Activated CD4-positive, alpha-beta T cell treated with anti-CD3 and anti-CD28 coated beads, Interleukin-2, amount 10 ng/mL, durations not matched to agents 7 days and 5 days (primary cell): ENCODE measurements at regions of chr2 and their contacts with region 1.

Region 1: DNA sequence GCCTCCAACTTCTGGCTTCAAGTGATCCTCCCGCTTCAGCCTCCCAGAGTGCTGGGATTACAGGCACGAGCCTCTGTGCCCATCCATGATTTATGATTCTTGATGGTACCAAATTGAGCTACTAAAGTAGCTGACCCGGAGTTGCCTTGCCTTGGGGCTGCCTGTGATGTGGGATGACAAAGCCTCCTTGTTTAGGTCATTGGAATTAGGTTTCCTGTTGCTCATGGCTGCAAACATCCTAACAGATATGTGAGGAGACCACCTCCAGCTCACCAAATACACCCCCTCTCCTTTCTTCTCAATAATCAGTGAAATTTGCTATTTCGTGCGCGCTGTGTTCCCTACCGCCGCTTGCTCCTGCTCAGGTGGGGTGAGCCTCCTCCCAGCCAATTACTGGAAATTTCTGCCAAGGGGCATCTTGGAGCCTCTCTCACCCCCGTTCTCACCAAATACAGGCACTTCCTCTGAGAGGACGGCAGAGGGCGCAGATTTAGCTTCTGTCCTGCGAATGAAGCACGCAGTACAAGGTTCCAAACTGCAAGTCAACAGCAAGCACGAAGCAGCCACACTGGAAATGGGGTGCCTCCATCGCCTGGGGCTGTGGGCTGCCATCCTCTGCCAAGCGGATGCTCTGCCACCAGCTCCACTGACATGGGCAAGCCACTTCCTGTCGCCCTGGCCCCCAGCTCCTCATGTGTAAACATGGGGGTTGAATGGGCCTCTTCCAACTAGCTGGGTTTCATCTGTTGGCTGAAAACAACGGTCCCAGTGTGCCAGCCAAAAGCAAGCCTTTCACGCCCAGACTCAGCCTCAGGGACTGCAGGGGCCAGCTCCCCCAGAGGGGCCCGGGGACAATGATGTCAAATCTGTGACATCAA is 71.7 kb downstream of the NCAPH start:
- DNase-seq: peak; percentile 84
- H3K4me3 Mint-ChIP-seq: peak overlapping the region; percentile 57
- H3K27ac Mint-ChIP-seq: peak overlapping the region; percentile 92
- H3K4me1 Mint-ChIP-seq: peaks cover 35% of the 10 kb centered on the region
- H3K27me3 Mint-ChIP-seq: no peaks in the 10 kb centered on the region

Region 2: DNA sequence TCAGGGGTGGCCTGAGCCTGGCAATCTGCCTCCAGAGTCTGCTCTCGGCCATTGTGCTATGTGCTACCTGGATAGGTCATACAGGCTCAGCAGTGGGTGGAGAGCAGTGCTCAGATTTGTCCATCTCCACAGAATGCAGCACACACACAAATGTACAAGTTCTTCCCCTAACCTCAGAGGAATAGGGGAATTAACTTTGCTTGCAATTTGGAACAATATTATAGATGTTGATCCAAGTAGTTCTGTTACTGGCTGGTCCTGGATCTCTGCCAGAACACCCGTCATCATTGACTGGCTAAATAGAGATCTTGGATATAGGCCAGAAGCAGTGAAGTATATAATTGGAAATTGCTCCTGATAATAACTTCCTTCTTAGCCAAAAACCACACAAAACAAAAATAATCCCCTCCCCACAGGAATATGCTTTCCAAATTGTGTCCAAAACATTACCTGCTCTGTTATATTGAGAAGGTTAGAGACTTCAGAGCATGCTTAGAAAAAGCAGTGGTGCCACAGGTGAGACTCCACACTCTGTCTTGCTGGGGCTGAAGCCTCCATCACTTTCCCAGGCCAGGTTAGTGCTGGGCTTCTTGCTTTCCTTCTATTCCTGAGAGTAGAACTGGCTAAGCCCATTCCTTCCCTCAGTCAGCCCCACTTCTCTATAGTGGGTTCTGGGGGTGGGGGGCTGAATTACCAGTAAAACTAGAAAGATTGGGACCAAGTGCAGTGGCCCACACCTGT is 32.9 kb before region 1 on chr2:
- CTCF ChIA-PET with region 1: no interaction called
- POLR2A ChIA-PET with region 1: no interaction called
- DNase-seq: no peak
- H3K4me3 Mint-ChIP-seq: no peak overlapping the region
- H3K27ac Mint-ChIP-seq: no peak overlapping the region
- H3K4me1 Mint-ChIP-seq: no peaks in the 10 kb centered on the region
- H3K27me3 Mint-ChIP-seq: no peaks in the 10 kb centered on the region

Region 3: DNA sequence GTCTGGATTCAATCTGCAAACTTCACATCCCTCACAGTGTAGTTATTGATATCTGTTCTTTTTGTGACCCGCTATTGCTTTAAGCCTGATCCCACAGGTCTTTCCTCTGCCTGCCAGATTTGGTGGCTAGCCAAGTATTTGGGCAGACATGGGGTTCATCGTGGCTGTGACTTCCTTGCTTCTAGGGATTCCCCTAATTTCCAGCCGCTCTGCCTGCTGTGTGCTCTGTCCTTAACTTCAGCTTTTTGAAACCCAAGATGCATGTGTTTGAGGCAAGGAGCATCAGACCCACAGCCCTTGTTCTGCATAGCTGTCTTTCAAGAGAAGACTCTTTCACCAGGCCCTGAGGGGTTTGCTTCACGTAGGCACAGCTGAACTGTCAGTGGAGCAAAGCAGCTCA is 17.5 kb before region 1 on chr2:
- CTCF ChIA-PET with region 1: interaction called, 11 read pairs
- POLR2A ChIA-PET with region 1: no interaction called
- DNase-seq: no peak
- H3K4me3 Mint-ChIP-seq: no peak overlapping the region
- H3K27ac Mint-ChIP-seq: no peak overlapping the region
- H3K4me1 Mint-ChIP-seq: peaks cover 9% of the 10 kb centered on the region
- H3K27me3 Mint-ChIP-seq: peaks cover 2% of the 10 kb centered on the region

Region 4: DNA sequence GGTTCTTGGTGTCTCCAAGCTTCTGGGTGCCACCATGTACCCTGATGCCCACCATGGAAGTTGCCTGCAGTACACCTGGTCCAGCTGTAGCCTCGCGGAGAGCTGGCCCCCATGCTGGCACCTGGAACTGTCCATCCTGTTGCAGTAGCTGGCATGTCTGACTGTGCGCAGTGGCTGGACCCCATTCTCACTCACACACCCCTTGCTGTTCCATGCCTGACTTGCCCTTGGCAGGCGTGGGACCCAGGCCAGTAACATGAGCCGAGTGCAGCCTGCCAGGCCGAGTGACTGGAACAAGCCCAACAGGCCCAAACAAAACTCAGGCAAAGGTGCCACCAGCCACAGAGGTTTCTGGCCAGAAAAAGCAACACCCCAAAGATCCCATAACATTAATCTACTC is 24.0 kb after region 1 on chr2:
- CTCF ChIA-PET with region 1: interaction called, 11 read pairs
- POLR2A ChIA-PET with region 1: interaction called, 4 read pairs
- DNase-seq: no peak
- H3K4me3 Mint-ChIP-seq: no peak overlapping the region
- H3K27ac Mint-ChIP-seq: no peak overlapping the region
- H3K4me1 Mint-ChIP-seq: peaks cover 6% of the 10 kb centered on the region
- H3K27me3 Mint-ChIP-seq: peaks cover 5% of the 10 kb centered on the region

Region 5: DNA sequence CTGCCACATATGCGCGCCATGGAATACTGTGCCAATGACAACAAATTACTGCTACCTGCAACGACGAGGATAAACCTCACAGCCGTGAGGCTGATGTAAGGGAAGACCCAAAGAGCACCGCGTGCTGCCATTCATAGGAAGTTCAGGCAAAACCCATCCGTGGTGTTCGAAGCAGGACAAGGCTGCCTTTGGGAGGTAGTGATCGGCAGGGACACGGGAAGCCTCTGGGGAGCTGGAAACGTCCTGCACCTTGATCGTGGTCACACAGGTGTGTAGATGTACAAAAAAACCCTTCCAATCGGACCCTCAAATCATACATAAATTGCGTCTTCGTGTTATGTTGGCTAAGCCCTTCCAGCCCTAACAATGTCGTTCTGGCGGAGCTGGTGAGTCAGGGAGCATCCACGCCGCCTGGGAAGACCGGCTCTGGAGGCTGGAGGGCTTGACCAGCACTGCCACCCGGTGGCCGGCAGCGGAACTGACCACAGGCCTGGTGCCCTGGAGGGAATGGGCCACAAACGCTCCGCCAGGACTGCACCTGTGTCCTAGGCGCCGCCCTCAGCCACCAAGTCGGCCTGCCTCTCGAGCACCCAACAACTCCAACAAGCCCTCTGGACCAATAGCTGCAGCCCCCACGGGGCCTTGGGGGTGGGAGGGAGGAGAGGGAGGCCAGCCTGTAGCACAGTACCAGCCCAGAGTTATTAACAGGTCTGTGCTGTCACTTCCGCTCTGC is 102.0 kb after region 1 on chr2:
- CTCF ChIA-PET with region 1: interaction called, 57 read pairs
- POLR2A ChIA-PET with region 1: no interaction called
- DNase-seq: peak; percentile 64
- H3K4me3 Mint-ChIP-seq: no peak overlapping the region
- H3K27ac Mint-ChIP-seq: peak overlapping the region; percentile 73
- H3K4me1 Mint-ChIP-seq: peaks cover 26% of the 10 kb centered on the region
- H3K27me3 Mint-ChIP-seq: peaks cover 10% of the 10 kb centered on the region

Region 6: DNA sequence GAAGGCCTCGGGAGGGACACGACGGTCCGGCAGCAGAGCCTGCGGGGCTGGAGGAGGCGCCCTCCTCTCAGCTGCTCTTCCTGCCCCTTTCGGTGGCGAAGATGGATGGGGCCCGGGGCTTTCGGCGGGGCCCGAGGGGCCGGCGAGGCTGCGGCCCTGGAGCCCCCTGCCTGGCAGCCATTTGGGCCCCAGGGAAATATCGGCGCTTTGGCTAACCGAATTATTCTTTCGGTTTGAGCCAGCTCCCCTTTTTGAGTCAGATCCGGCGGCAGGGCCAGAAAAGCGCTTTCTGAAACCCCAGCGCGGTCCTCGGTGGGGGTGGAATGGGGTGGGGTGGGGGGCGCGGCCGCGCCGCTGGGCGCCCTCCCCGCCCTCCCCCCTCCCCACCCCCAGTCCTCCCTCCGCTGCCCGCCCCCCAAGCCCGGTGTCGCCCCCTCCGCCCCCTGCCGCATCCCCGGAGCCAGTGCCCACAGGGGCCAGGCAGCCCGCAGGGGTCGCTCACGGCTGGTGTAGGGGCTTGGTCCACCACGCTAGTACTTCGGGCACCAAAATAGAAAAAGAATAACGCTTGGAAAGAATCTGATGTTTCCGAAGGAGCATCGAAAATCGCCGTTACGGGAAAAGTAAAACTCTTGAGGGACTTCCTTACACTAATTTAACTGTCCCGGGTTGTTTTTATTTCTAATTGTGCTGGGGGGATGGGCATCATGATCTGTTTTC is 120.2 kb after region 1 on chr2:
- CTCF ChIA-PET with region 1: interaction called, 11 read pairs
- POLR2A ChIA-PET with region 1: no interaction called
- DNase-seq: peak; percentile 73
- H3K4me3 Mint-ChIP-seq: peak overlapping the region; percentile 72
- H3K27ac Mint-ChIP-seq: peak overlapping the region; percentile 87
- H3K4me1 Mint-ChIP-seq: peaks cover 90% of the 10 kb centered on the region
- H3K27me3 Mint-ChIP-seq: no peaks in the 10 kb centered on the region

Region 7: GRCh38 chr2:96554293-96555145 is 147.2 kb after region 1 on chr2:
- CTCF ChIA-PET with region 1: interaction called, 21 read pairs
- POLR2A ChIA-PET with region 1: no interaction called
- DNase-seq: peak; percentile 70
- H3K4me3 Mint-ChIP-seq: no peak overlapping the region
- H3K27ac Mint-ChIP-seq: peak overlapping the region; percentile 62
- H3K4me1 Mint-ChIP-seq: peaks cover 28% of the 10 kb centered on the region
- H3K27me3 Mint-ChIP-seq: no peaks in the 10 kb centered on the region